ENCODE measurements at regions of chr5 and their contacts with region 1.

Region 1: GRCh38 chr5:76953551-76954382 is 922 bp downstream of the CRHBP start:
- DNase-seq: no peak
- ATAC-seq: no peak

Region 2: GRCh38 chr5:76766746-76767145 is 187.0 kb before region 1 on chr5:
- intact Hi-C with region 1: no loop called
- DNase-seq: no peak
- ATAC-seq: no peak

Region 3: DNA sequence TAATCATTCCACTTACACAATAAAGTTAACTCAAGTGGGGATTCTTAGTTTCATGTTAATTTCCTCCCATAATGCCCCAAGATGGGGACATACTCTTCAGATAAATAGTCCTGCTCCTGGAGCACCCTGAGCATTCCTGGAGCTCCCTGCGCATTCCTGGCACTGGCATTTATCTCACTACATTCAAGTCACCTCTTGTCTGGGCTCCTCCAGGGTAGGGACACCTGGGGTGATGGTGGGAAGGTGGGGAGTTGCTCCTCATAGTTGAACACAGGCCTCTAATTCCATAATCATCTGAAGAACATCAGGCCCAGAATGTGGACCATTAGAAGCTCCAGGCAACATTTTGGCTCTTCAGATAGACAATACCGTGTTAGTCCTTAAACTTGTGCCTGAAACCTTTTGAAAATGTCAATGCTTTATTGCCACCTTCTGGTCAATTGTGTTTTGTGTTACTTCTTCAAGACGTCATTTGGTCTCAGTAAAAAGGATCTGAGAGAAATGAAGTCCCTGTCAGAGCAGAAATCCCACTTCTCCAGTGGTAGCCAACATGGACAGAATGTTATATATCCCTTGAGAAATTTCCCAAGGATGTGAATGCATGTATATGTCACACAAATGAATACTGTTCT is 62.3 kb after region 1 on chr5:
- intact Hi-C with region 1: loop called (anchors 2 kb)
- DNase-seq: no peak
- ATAC-seq: no peak

Region 4: GRCh38 chr5:77239126-77239741 is 285.5 kb after region 1 on chr5:
- intact Hi-C with region 1: no loop called
- DNase-seq: no peak
- ATAC-seq: no peak